Tibial artery (tissue), 4 donors: ENCODE measurements at regions of chr7 and their contacts with region 1.

Region 1: DNA sequence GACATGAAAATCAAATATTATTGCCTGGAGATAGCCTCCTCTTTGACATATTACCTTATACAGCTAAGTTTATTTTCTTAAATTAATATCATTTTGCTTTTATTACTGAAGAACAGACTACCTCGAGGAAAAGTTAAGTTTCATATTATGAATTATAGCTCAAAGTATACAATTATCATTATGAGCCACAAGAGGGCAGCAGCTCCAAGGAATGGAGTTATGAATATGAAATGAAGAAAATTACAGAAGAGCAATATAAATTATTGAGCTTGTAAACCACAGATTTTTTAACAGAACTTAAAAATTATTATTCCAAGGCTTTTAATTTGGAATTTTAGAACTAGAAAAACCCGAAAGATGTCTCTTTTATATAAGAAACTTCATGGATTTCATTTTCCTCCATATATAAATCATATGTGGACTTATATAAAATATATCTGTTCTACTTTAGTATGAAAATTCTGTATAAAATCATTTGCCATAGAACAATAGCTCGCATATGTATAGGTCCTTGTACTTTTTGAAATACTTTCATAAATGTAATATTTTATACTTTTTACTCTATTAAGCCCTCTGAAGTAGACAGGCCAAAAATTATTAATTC is 40.1 kb downstream of the IQUB start:
- DNase-seq: no peak
- H3K4me3 ChIP-seq: no peak overlapping the region
- H3K27ac ChIP-seq: no peak overlapping the region
- H3K4me1 ChIP-seq: no peaks in the 10 kb centered on the region
- H3K27me3 ChIP-seq: no peaks in the 10 kb centered on the region
- CTCF ChIP-seq: peak; percentile 49 to 71

Region 2: GRCh38 chr7:123748734-123749536 is 254.6 kb after region 1 on chr7 and contains the start of gene WASL:
- intact Hi-C with region 1: no loop called
- DNase-seq: peak; percentile 90 to 96
- H3K4me3 ChIP-seq: peak within 1 kb of the TSS; percentile 77 to 98
- H3K27ac ChIP-seq: peak within 1 kb of the TSS; percentile 98 to 99
- H3K4me1 ChIP-seq: peaks cover 0 to 62% (median 36%) of the 10 kb centered on the region in 4 donors
- H3K27me3 ChIP-seq: no peaks in the 10 kb centered on the region
- CTCF ChIP-seq: no peak

Region 3: DNA sequence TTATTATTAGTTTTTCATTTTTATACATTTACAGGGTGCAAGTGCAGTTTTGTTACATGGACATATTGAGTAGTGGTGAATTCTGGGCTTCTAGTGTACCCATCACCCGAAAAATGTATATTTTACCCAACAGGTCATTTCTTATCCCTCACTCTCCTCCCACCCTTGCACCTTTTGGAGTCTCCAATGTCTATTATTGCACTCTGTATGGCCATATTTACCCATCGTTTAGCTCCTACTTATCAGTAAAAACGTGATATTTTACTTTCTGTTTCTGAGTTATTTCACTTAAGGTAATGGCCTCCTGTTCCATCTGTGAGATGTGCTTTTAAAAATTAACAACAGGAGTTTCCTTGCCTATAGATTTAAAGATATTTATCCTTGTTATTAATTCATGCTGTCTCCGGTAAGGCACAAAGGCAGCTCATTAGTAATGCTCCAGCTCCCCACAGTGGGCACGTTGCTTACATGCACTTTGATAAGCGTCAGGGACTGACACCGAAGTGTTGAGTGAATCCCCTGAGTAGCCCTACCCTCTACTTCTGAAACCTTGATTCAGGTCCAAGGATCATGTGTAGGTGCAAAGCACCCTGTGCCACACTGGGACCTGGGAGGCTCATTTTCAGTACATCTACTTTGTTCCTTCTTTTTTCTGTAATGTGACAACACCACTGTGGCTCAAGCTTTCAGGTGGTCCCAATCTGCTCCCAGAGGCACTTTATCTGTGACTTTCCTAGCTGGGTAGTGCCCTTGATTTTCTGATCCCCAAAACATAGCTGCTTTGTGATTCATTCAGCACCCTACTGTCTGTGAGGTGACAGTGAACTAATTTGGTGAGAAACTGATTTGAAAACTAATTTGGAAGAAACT is 377.9 kb after region 1 on chr7:
- intact Hi-C with region 1: loop called (anchors 10 kb)
- DNase-seq: no peak
- H3K4me3 ChIP-seq: no peak overlapping the region
- H3K27ac ChIP-seq: no peak overlapping the region
- H3K4me1 ChIP-seq: no peaks in the 10 kb centered on the region
- H3K27me3 ChIP-seq: peaks cover 0 to 5% of the 10 kb centered on the region in 2 donors
- CTCF ChIP-seq: peak in 1 of 2 experiments; percentile 23